GM13976 (cell line): ENCODE measurements at regions of chr2 and their contacts with region 1.

Region 1: GRCh38 chr2:65064728-65065552 is 8.7 kb downstream of the CEP68 start:
- DNase-seq: peak; percentile 76
- CTCF ChIP-seq: peak; percentile 69

Region 2: DNA sequence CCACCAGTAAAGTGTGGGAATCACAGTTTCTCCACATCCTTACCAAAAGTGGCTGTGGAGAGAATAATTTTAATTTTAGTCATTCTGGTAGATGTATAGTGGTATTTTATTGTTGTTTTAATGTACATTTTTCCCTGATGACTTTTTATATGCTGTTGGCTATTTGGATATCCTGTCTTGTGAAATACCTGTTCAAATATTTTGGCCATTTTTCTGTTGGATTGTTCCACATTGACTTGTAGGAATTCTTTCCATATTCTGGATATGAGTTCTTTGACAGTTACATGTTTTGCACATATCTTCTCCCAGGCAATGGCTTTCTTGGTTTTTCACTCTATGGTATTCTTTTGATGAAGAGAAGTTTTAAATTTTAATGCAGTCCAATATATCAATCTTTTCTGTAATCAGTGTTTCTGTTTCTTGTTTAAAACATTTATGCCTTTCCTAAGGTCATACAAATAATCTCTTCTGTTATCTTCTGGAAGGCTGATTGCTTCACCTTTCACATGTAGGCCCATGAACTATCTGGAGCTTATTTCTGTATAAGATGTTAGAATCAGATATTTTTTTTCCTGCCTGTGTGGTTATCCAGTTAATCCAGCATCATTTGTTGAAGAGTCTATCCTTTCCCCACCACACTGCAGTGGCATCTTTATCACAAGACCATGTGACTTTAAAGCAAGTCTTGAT is 521.8 kb before region 1 on chr2:
- in situ Hi-C with region 1: no loop called
- DNase-seq: no peak
- CTCF ChIP-seq: no peak

Region 3: GRCh38 chr2:65164426-65164891 is 99.5 kb after region 1 on chr2:
- in situ Hi-C with region 1: loop called (anchors 10 kb)
- DNase-seq: no peak
- CTCF ChIP-seq: no peak

Region 4: GRCh38 chr2:65566620-65567019 is 501.7 kb after region 1 on chr2:
- in situ Hi-C with region 1: loop called (anchors 10 kb)
- DNase-seq: no peak
- CTCF ChIP-seq: no peak